ENCODE measurements at regions of chr1 and their contacts with region 1.

Region 1: GRCh38 chr1:76154206-76154956 is 79.8 kb downstream of the ST6GALNAC3 start:
- DNase-seq: peak; percentile 64 to 76
- H3K4me3 ChIP-seq: peak overlapping the region; percentile 40 to 50
- H3K27ac ChIP-seq: peak overlapping the region in 1 of 2 donors; percentile 26
- H3K4me1 ChIP-seq: peaks cover 0 to 10% (median 2%) of the 10 kb centered on the region in 4 donors
- H3K27me3 ChIP-seq: no peaks in the 10 kb centered on the region
- CTCF ChIP-seq: peak; percentile 76 to 93

Region 2: DNA sequence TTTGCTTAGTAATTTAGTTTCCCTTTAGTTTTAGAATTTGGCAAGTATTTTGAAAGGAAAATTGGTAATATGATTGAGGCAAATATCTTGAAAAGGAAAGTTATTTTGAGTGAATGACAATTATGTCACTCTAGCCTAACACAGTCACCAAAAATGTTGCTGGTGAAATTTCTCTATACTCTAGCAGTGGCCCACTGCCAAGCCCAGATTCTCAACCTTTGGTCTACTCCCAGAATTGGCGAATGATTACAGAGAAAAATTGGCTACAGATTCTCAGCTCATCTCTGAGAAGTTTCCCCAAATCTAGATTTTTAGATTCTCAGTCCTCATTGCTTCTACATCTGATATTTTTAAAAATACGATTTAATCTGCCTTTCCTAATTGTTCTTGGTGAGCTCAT is 980.0 kb after region 1 on chr1:
- intact Hi-C with region 1: loop called (anchors 10 kb)
- DNase-seq: no peak
- H3K4me3 ChIP-seq: no peak overlapping the region
- H3K27ac ChIP-seq: no peak overlapping the region
- H3K4me1 ChIP-seq: no peaks in the 10 kb centered on the region
- H3K27me3 ChIP-seq: no peaks in the 10 kb centered on the region
- CTCF ChIP-seq: no peak